Ascending aorta (tissue), 2 donors: ENCODE measurements at regions of chr19 and their contacts with region 1.

Region 1: GRCh38 chr19:5987077-5987818 is 9.3 kb upstream of the RANBP3 start:
- DNase-seq: peak; percentile 28 to 84
- H3K4me3 ChIP-seq: peak overlapping the region; percentile 53 to 68
- H3K27ac ChIP-seq: no peak overlapping the region
- H3K4me1 ChIP-seq: peaks cover 0 to 19% of the 10 kb centered on the region in 2 donors
- H3K27me3 ChIP-seq: no peaks in the 10 kb centered on the region
- CTCF ChIP-seq: peak; percentile 85 to 96 (median 96)

Region 2: GRCh38 chr19:6011794-6012193 is 24.5 kb after region 1 on chr19:
- intact Hi-C with region 1: no loop called
- DNase-seq: no peak
- H3K4me3 ChIP-seq: no peak overlapping the region
- H3K27ac ChIP-seq: no peak overlapping the region
- H3K4me1 ChIP-seq: no peaks in the 10 kb centered on the region
- H3K27me3 ChIP-seq: no peaks in the 10 kb centered on the region
- CTCF ChIP-seq: no peak

Region 3: DNA sequence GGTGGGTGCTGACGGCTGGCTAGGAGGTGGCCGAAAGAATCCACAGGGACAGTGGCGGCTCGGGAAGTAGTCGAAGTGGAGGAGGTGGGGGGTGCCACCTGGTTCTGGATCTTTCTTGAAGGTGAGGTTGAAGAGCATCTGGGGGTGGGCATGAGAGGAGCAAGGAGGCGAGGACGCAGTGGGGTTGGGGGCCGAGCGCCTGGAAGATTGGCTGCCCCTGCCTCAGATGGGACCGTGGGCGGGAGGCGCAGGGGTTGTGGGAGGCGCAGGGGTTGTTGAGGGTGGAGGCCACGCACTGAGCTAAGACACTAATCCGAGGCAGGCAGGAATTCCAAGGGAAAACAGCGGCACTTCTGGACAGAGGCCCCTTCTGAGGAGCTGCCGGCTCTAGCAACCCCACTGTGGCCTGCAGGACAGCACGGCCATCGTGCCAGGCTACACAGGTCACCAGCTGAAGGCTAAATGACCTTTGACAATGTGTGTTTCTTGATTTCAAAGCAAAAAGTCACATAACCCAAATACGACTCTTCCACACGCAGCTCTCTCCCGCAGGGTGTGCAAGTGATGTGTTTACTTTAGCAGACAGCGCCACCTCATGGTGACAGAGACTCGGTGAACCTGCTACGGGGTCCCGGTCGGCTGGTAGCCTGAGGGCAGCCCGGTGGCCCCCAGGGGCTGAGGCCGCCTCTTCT is 34.8 kb after region 1 on chr19:
- intact Hi-C with region 1: loop called (anchors 2 kb)
- DNase-seq: peak in 1 of 2 donors; percentile 78
- H3K4me3 ChIP-seq: no peak overlapping the region
- H3K27ac ChIP-seq: peak overlapping the region; percentile 46 to 51
- H3K4me1 ChIP-seq: peaks cover 0 to 5% of the 10 kb centered on the region in 2 donors
- H3K27me3 ChIP-seq: no peaks in the 10 kb centered on the region
- CTCF ChIP-seq: peak; percentile 53 to 66 (median 58)

Region 4: DNA sequence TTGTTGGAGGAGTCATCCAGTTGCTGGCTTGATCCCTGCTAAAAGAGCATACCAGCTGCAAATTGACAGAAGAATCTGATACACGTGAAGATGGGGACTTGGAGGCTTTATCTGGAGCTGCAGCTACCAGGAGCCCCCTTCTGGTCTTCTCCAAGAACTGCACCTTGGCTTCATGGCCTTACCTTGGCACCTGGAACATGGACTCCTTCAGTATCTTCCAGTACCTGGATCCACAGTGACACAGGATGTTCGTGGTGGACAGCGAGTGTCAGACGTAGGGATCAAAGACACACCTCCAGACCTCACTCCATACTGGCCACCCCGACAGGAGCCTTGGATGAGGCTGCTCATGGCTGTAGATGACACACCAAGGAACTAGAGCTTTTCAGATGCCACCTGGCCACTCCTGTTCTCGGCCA is 138.3 kb after region 1 on chr19:
- intact Hi-C with region 1: loop called (anchors 5 kb)
- DNase-seq: peak in 1 of 2 donors; percentile 80
- H3K4me3 ChIP-seq: no peak overlapping the region
- H3K27ac ChIP-seq: no peak overlapping the region
- H3K4me1 ChIP-seq: no peaks in the 10 kb centered on the region
- H3K27me3 ChIP-seq: no peaks in the 10 kb centered on the region
- CTCF ChIP-seq: peak; percentile 90 to 98 (median 95)